SK-N-SH (cell line): ENCODE measurements at regions of chr3 and their contacts with region 1.

Region 1: GRCh38 chr3:119279101-119279554 is 15.1 kb upstream of the ARHGAP31 start:
- DNase-seq: no peak
- H3K4me3 ChIP-seq: no peak overlapping the region
- H3K27ac ChIP-seq: peak overlapping the region in 1 of 2 experiments; percentile 61; a peak in 1 of 4 replicates
- H3K4me1 ChIP-seq: peaks cover 0 to 19% of the 10 kb centered on the region in 2 experiments; a peak in 2 of 4 replicates
- H3K27me3 ChIP-seq: no peaks in the 10 kb centered on the region
- CTCF ChIP-seq: no peak
- EP300 ChIP-seq: no peak
- RAD21 ChIP-seq: no peak

Region 2: GRCh38 chr3:119034256-119035013 is 244.7 kb before region 1 on chr3 and contains the start of gene IGSF11:
- CTCF ChIA-PET with region 1: no interaction called
- POLR2A ChIA-PET with region 1: no interaction called
- DNase-seq: peak; percentile 96
- H3K4me3 ChIP-seq: peak within 1 kb of the TSS; percentile 60 to 69
- H3K27ac ChIP-seq: no peak within 1 kb of the TSS
- H3K4me1 ChIP-seq: no peaks in the 10 kb centered on the region; a peak in 1 of 4 replicates
- H3K27me3 ChIP-seq: peaks cover 27% of the 10 kb centered on the region
- CTCF ChIP-seq: peak; percentile 54
- EP300 ChIP-seq: no peak
- RAD21 ChIP-seq: peak; percentile 62
- polyA plus RNA-seq, gene IGSF11: 0.07 and 0.08 TPM in 2 replicates

Region 3: GRCh38 chr3:119257682-119258410 is 21.3 kb before region 1 on chr3:
- CTCF ChIA-PET with region 1: interaction called, 15 read pairs
- POLR2A ChIA-PET with region 1: interaction called, 4 read pairs
- DNase-seq: no peak
- H3K4me3 ChIP-seq: no peak overlapping the region
- H3K27ac ChIP-seq: no peak overlapping the region
- H3K4me1 ChIP-seq: peaks cover 0 to 4% of the 10 kb centered on the region in 2 experiments; a peak in 2 of 4 replicates
- H3K27me3 ChIP-seq: no peaks in the 10 kb centered on the region
- CTCF ChIP-seq: no peak
- EP300 ChIP-seq: no peak
- RAD21 ChIP-seq: no peak

Region 4: GRCh38 chr3:119346076-119346496 is 67.0 kb after region 1 on chr3:
- CTCF ChIA-PET with region 1: interaction called, 33 read pairs
- POLR2A ChIA-PET with region 1: no interaction called
- DNase-seq: no peak
- H3K4me3 ChIP-seq: no peak overlapping the region
- H3K27ac ChIP-seq: no peak overlapping the region; a peak in 1 of 4 replicates
- H3K4me1 ChIP-seq: peaks cover 0 to 18% of the 10 kb centered on the region in 2 experiments; a peak in 2 of 4 replicates
- H3K27me3 ChIP-seq: no peaks in the 10 kb centered on the region
- CTCF ChIP-seq: no peak
- EP300 ChIP-seq: no peak
- RAD21 ChIP-seq: no peak

Region 5: GRCh38 chr3:119388577-119388976 is 109.4 kb after region 1 on chr3:
- CTCF ChIA-PET with region 1: interaction called, 10 read pairs
- POLR2A ChIA-PET with region 1: no interaction called
- DNase-seq: peak; percentile 38
- H3K4me3 ChIP-seq: no peak overlapping the region
- H3K27ac ChIP-seq: no peak overlapping the region; a peak in 1 of 4 replicates
- H3K4me1 ChIP-seq: no peaks in the 10 kb centered on the region; a peak in 1 of 4 replicates
- H3K27me3 ChIP-seq: no peaks in the 10 kb centered on the region
- CTCF ChIP-seq: peak; percentile 39
- EP300 ChIP-seq: no peak
- RAD21 ChIP-seq: peak; percentile 65

Region 6: DNA sequence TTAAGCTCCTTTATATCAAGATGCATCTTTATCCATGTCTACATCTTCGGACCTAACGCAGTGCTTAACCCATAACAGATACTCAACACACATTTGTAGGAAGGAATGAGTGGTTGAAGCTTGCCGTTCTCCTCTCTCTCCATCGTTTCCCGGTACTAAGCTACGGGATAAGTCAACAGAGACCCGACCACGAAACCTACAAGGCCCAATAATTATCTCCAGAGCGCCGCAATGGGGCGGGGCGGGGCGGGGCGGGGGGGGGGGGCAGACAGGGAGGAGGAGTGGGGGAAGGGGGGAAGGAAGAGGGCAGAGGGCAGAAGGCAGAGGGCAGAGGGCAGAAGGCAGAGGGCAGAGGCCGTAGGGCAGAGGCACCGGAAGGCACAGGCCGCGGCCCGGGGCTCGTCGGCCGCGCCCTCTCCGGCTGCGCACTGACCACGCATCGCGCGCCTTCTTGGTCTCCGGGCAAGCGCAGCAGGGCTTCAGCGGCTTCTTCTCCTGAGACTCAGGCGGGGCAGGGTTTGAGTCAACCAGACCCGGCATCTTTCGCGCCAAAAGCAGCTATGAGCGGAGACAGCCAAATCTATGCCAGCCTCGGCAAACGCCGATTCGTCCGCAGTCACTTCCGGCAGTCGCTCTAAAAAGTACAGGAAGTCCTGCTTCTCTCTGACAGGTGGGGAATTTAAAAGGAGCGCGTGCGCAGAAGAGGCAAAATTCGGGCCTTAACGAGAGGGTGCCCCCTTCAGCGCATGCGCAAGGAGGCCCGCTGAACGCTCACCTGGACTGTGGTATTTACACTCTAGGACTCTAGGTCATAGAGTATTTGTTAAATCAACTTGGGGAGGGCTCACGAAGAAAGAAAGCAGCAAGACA is 397.9 kb after region 1 on chr3 and contains the start of gene COX17:
- CTCF ChIA-PET with region 1: interaction called, 40 read pairs
- POLR2A ChIA-PET with region 1: no interaction called
- DNase-seq: peak; percentile 62
- H3K4me3 ChIP-seq: peak within 1 kb of the TSS; percentile 50 to 52
- H3K27ac ChIP-seq: peak within 1 kb of the TSS; percentile 29 to 81
- H3K4me1 ChIP-seq: peaks cover 0 to 27% of the 10 kb centered on the region in 2 experiments; a peak in 2 of 4 replicates
- H3K27me3 ChIP-seq: no peaks in the 10 kb centered on the region
- CTCF ChIP-seq: no peak
- EP300 ChIP-seq: no peak
- RAD21 ChIP-seq: no peak; the same call in 1 of the 2 replicates
- polyA plus RNA-seq, gene COX17: 15.1 and 21.5 TPM in 2 replicates